ENCODE measurements at regions of chr16 and their contacts with region 1.

Region 1: DNA sequence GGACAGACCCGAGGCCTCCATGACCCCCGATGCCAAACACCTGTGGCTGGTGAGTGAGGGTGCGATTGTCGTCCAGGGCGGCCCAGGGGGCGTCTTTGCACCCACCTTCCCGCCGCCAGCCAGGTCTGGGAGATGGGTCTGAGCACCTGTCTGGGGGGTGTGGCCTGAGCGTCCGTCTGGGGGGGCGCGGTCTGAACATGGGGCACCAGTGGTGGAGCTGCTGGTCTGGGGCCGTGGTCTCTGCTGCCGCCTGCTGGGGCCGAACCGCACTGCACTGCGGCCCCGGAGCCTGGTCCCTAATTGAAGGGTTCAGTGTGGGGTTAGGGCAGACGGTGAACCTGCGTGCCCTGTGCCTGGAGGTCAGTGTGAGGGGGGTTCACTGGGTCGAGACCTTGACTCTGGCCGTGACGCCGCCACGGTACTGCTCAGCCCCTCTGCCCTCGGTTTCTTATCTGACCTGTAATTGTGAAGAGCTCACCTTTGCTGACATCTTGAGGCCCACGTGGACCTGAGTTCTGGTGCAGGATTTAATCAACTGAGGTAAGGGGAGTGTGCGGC is 12.6 kb upstream of the TCF25 start:
- DNase-seq: peak; percentile 58 to 91
- ATAC-seq: peak; percentile 93 to 96
- H3K4me3 ChIP-seq: no peak overlapping the region
- H3K27ac ChIP-seq: no peak overlapping the region
- H3K4me1 ChIP-seq: peaks cover 4% of the 10 kb centered on the region; the same call in 1 of the 3 replicates
- CTCF ChIP-seq: peak; percentile 88
- EP300 ChIP-seq: no peak
- POLR2A ChIP-seq: no peak
- RAD21 ChIP-seq: peak; percentile 93

Region 2: DNA sequence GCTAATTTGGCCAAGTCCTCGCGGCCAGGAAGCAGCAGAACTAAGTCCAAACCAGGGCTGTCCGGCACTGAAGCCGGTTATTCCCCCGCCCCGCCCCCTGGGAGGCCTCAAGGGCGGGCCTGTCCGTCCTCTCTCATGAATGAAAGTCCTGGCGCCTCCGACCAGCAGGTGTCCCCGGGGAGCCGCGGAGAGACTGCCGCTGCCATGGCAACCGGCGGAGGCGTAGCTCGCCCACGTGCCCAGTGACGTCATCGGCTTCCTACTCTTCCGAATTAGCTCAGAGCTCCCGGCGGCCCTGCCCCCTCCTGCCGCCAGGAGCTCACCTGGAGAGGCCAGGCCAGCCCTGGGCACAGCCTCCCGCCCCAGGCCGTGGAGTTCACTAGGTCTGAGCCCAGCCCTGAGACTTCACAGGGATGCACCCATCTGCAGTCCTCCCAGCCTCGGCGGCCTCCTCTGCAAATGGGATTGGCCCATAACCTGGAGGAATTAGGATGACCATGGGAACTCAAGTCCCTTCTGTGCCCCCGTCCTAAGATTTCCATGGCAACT is 160.7 kb before region 1 on chr16:
- CTCF ChIA-PET with region 1: interaction called, 23 read pairs
- POLR2A ChIA-PET with region 1: interaction called, 4 read pairs
- DNase-seq: peak; percentile 93 to 99
- ATAC-seq: peak; percentile 49 to 76
- H3K4me3 ChIP-seq: peak overlapping the region; percentile 69
- H3K27ac ChIP-seq: peak overlapping the region; percentile 82 to 92
- H3K4me1 ChIP-seq: peaks cover 12% of the 10 kb centered on the region
- CTCF ChIP-seq: peak; percentile 69
- EP300 ChIP-seq: no peak
- POLR2A ChIP-seq: no peak
- RAD21 ChIP-seq: peak; percentile 63 to 71

Region 3: DNA sequence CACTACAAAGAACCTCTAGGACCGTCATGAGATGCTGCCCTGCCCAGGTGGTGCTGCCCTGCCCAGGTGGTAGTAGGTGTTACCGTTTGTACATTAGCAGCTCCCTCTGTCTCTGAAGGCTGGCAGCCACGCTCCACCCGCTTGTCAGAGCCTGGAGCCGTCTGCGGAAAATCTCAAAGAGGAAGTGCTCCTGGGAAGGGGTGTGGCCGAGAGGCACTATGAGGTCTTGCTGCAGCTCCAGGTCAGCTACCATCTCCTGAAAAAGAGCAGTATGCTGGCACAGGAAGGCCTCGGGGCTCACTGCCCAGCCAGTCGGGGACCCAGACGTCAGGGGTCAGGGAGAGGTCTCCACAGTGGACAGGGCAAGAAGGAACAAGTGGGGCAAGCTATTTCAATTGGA is 111.2 kb before region 1 on chr16:
- CTCF ChIA-PET with region 1: interaction called, 71 read pairs
- POLR2A ChIA-PET with region 1: no interaction called
- DNase-seq: no peak
- ATAC-seq: no peak
- H3K4me3 ChIP-seq: no peak overlapping the region
- H3K27ac ChIP-seq: no peak overlapping the region
- H3K4me1 ChIP-seq: no peaks in the 10 kb centered on the region
- CTCF ChIP-seq: no peak
- EP300 ChIP-seq: no peak
- POLR2A ChIP-seq: no peak
- RAD21 ChIP-seq: no peak

Region 4: GRCh38 chr16:89805136-89805905 is 55.5 kb before region 1 on chr16:
- CTCF ChIA-PET with region 1: interaction called, 10 read pairs
- POLR2A ChIA-PET with region 1: no interaction called
- DNase-seq: no peak
- ATAC-seq: no peak
- H3K4me3 ChIP-seq: no peak overlapping the region
- H3K27ac ChIP-seq: no peak overlapping the region
- H3K4me1 ChIP-seq: no peaks in the 10 kb centered on the region
- CTCF ChIP-seq: no peak
- EP300 ChIP-seq: no peak
- POLR2A ChIP-seq: no peak
- RAD21 ChIP-seq: no peak

Region 5: GRCh38 chr16:89828199-89828778 is 32.5 kb before region 1 on chr16 and contains the start of gene SPIRE2:
- CTCF ChIA-PET with region 1: interaction called, 16 read pairs
- POLR2A ChIA-PET with region 1: no interaction called
- DNase-seq: peak in 1 of 2 experiments; percentile 53
- ATAC-seq: peak; percentile 74 to 75
- H3K4me3 ChIP-seq: peak within 1 kb of the TSS; percentile 71
- H3K27ac ChIP-seq: peak within 1 kb of the TSS; percentile 76 to 98
- H3K4me1 ChIP-seq: peaks cover 14% of the 10 kb centered on the region
- CTCF ChIP-seq: no peak
- EP300 ChIP-seq: no peak
- POLR2A ChIP-seq: peak; percentile 66
- RAD21 ChIP-seq: no peak
- polyA plus RNA-seq, gene SPIRE2: 6.0 and 7.7 TPM in 2 replicates

Region 6: GRCh38 chr16:89848997-89849396 is 11.8 kb before region 1 on chr16:
- CTCF ChIA-PET with region 1: interaction called, 31 read pairs
- POLR2A ChIA-PET with region 1: no interaction called
- DNase-seq: no peak
- ATAC-seq: no peak
- H3K4me3 ChIP-seq: no peak overlapping the region
- H3K27ac ChIP-seq: no peak overlapping the region
- H3K4me1 ChIP-seq: no peaks in the 10 kb centered on the region
- CTCF ChIP-seq: no peak
- EP300 ChIP-seq: no peak
- POLR2A ChIP-seq: no peak
- RAD21 ChIP-seq: no peak

Region 7: GRCh38 chr16:89903006-89903405 is 42.2 kb after region 1 on chr16:
- CTCF ChIA-PET with region 1: no interaction called
- POLR2A ChIA-PET with region 1: no interaction called
- DNase-seq: no peak
- ATAC-seq: no peak; a peak in 1 of 6 replicates
- H3K4me3 ChIP-seq: no peak overlapping the region
- H3K27ac ChIP-seq: no peak overlapping the region
- H3K4me1 ChIP-seq: no peaks in the 10 kb centered on the region
- CTCF ChIP-seq: no peak
- EP300 ChIP-seq: no peak
- POLR2A ChIP-seq: no peak
- RAD21 ChIP-seq: no peak